Endothelial cell of umbilical vein (primary cell): ENCODE measurements at regions of chr22 and their contacts with region 1.

Region 1: GRCh38 chr22:40757071-40757470 is 62.1 kb downstream of the SLC25A17 start:
- DNase-seq: no peak
- H3K4me3 ChIP-seq: no peak overlapping the region
- H3K27ac ChIP-seq: no peak overlapping the region
- H3K4me1 ChIP-seq: no peaks in the 10 kb centered on the region
- H3K27me3 ChIP-seq: no peaks in the 10 kb centered on the region
- CTCF ChIP-seq: no peak
- POLR2A ChIP-seq: no peak

Region 2: DNA sequence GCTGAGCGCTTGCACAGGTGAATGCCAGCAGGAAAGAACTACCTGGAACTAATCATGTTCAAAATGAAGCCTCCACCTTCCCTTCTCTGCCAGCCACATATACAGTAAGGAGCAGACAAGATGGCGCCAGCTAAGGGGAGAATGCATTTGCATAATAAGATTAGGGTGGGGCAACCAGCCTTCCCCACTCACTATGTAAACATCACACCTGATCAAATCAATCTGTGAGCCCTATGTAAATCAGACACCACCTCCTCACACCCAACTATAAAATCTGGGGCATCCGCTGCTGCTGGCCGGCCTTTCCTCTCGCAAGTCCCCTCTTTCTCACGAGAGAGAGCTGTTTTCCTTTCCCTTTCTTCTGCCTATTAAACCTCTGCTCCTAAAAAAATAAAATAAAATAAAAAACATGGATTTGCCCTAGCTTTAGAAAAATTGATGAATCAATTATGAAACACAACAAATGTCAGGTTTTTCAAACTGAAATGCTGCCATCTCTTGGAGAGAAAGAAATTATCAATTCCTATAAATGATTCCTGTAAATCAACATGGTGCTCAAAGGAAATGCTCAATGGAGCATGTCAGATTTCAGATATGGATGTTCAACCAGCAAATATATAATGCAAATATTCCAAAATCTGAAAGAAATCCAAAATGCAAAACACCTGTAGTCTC is 277.8 kb before region 1 on chr22:
- CTCF ChIA-PET with region 1: no interaction called
- POLR2A ChIA-PET with region 1: no interaction called
- dilution Hi-C with region 1: no loop called
- intact Hi-C with region 1: no loop called
- DNase-seq: no peak
- H3K4me3 ChIP-seq: no peak overlapping the region
- H3K27ac ChIP-seq: no peak overlapping the region
- H3K4me1 ChIP-seq: peaks cover 7% of the 10 kb centered on the region
- H3K27me3 ChIP-seq: no peaks in the 10 kb centered on the region
- CTCF ChIP-seq: no peak
- POLR2A ChIP-seq: no peak

Region 3: GRCh38 chr22:40645579-40646197 is 111.4 kb before region 1 on chr22:
- CTCF ChIA-PET with region 1: interaction called, 11 read pairs
- POLR2A ChIA-PET with region 1: no interaction called
- dilution Hi-C with region 1: no loop called
- intact Hi-C with region 1: no loop called
- DNase-seq: no peak
- H3K4me3 ChIP-seq: no peak overlapping the region
- H3K27ac ChIP-seq: no peak overlapping the region
- H3K4me1 ChIP-seq: peaks cover 6% of the 10 kb centered on the region
- H3K27me3 ChIP-seq: no peaks in the 10 kb centered on the region
- CTCF ChIP-seq: no peak
- POLR2A ChIP-seq: no peak

Region 4: DNA sequence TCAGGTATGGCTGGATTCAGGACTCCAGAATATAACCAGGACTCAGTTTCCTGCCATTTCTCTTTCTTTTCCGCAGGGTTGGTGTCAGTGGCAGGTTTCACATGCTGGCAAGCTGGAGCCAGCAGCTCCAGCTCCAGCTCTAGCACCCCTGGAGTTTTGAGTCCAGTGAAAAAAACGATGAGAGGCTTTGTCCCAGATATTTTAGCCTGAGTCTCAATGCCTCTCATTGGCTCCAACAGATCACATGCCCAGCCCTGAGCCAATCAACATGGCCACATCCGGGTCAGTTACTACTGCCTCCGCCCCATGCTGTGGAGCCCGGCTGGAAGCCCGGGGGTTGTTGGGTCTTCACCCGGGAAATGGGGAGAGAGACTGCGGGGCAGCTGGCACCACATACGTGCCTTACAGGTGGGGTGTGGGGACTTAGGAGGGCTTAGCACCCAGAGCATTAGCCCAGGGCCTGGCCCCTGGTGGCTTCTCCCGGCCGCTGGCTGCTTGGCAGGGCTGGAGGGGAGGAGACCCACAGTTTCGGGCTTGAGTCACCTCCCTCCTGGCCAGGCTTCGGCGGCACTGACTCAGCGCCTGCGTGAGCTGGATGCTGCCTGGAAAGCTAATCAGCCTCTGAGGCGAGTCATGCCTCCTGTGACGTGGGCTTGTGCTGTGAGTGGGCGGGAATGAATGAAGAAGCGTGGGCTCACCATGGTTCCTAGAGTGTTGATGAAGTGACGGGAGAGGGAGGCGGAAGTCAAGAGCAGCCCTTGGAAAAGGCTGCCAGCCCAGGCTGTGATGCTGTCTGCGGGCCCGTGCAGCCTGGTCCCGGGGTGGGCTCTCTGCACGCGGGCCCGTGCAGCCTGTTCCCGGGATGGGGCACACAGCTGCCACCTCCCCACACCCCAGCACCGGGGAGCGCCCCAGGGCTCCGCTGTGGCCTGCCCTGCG is 105.2 kb before region 1 on chr22:
- CTCF ChIA-PET with region 1: interaction called, 26 read pairs
- POLR2A ChIA-PET with region 1: no interaction called
- dilution Hi-C with region 1: no loop called
- intact Hi-C with region 1: no loop called
- DNase-seq: peak; percentile 98
- H3K4me3 ChIP-seq: peak overlapping the region in 2 of 3 experiments; percentile 49 to 64
- H3K27ac ChIP-seq: peak overlapping the region; percentile 88
- H3K4me1 ChIP-seq: peaks cover 14% of the 10 kb centered on the region
- H3K27me3 ChIP-seq: no peaks in the 10 kb centered on the region
- CTCF ChIP-seq: peak in 1 of 2 donors; percentile 6
- POLR2A ChIP-seq: peak; percentile 91

Region 5: DNA sequence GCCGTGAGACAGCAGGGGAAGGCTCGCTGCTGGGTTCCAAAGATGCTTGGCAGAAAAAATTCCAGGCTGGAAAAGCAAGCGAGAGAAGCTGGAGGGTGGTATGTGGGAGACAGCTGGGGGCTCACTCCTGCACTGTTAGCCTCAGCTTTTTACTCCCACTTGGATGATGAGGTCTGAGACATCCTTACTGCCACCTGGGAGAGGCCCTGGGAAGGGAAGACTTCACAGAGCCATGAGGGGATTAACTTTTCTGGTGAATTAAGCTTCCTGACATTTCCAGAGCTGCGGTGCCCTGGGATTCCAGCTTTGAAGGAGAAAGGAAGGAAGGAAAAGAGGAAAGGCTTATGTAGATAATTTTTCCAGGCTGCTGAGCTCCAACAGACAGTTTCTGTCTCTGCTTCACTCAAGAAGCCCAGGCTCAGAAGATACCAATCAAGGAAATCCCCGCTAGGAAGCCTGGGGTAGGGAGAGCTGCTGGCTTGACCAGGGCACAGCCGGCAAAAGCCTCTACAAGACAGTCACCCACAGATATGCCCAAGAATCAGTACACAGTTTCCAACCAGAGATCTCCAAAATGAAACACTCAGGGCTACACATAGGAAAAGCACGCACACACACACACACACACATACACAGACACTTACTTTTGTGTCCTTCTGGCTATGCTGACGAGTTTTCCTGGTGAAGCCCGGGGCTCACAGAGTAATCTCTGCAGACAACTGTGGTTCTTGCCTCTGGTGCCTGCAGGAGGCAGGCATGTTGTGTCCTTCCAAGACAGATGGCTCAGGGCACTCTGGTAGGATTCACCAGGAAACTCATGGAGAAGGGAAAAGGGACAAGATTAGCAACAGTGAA is 76.9 kb before region 1 on chr22:
- CTCF ChIA-PET with region 1: interaction called, 189 read pairs
- POLR2A ChIA-PET with region 1: interaction called, 3 read pairs
- dilution Hi-C with region 1: no loop called
- intact Hi-C with region 1: loop called (anchors 1 kb)
- DNase-seq: peak; percentile 38
- H3K4me3 ChIP-seq: no peak overlapping the region
- H3K27ac ChIP-seq: no peak overlapping the region
- H3K4me1 ChIP-seq: peaks cover 7% of the 10 kb centered on the region
- H3K27me3 ChIP-seq: peaks cover 19 to 20% of the 10 kb centered on the region in 2 experiments
- CTCF ChIP-seq: peak in 1 of 2 donors; percentile 7
- POLR2A ChIP-seq: no peak

Region 6: GRCh38 chr22:40714192-40714951 is 42.7 kb before region 1 on chr22:
- CTCF ChIA-PET with region 1: interaction called, 21 read pairs
- POLR2A ChIA-PET with region 1: no interaction called
- dilution Hi-C with region 1: no loop called
- intact Hi-C with region 1: no loop called
- DNase-seq: peak; percentile 19
- H3K4me3 ChIP-seq: no peak overlapping the region
- H3K27ac ChIP-seq: no peak overlapping the region
- H3K4me1 ChIP-seq: peaks cover 4% of the 10 kb centered on the region
- H3K27me3 ChIP-seq: peaks cover 0 to 3% of the 10 kb centered on the region in 2 experiments
- CTCF ChIP-seq: no peak
- POLR2A ChIP-seq: no peak

Region 7: DNA sequence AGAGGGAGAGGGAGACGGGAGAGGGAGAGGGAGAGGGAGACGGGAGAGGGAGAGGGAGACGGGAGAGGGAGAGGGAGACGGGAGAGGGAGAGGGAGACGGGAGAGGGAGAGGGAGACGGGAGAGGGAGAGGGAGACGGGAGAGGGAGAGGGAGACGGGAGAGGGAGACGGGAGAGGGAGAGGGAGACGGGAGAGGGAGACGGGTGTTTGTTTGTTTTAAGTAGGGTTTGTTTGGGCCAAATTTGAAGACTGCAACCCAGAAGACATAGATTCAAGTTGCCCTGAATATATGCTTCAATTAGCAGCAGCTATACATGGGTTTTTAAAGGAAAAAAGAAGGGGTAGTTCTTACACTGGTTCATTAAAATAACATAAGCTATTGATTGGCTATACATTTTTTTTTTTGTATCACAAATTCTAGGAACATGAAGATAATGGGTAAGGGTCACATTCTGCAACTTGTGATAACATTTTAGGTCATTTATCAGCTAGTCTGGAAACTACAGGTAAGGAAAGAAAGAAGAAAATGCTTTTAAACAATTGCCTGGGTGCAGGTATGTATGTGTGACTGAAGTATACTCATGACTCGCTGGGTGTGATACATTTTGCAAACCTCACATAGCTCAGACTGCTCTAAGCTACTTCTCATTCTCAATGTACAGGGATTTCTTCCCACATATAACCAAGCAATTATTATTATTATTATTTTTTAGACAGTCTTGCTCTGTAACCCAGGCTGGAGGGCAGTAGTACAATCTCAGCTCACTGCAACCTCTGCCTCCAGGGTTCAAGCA is 10.4 kb before region 1 on chr22:
- CTCF ChIA-PET with region 1: interaction called, 21 read pairs
- POLR2A ChIA-PET with region 1: no interaction called
- dilution Hi-C with region 1: no loop called
- intact Hi-C with region 1: no loop called
- DNase-seq: no peak
- H3K4me3 ChIP-seq: no peak overlapping the region
- H3K27ac ChIP-seq: no peak overlapping the region
- H3K4me1 ChIP-seq: no peaks in the 10 kb centered on the region
- H3K27me3 ChIP-seq: peaks cover 4% of the 10 kb centered on the region in 2 experiments
- CTCF ChIP-seq: no peak
- POLR2A ChIP-seq: no peak